ENCODE measurements at regions of chr21 and their contacts with region 1.

Region 1: GRCh38 chr21:38805328-38806152 is at the start of gene ETS2:
- DNase-seq: peak; percentile 91 to 94
- ATAC-seq: peak; percentile 88 to 94 (median 92)
- H3K4me3 ChIP-seq: peak within 1 kb of the TSS; percentile 68 to 100 (median 92)
- H3K27ac ChIP-seq: peak within 1 kb of the TSS; percentile 91 to 99 (median 98)
- H3K4me1 ChIP-seq: peaks cover 0 to 39% (median 16%) of the 10 kb centered on the region in 9 donors
- H3K27me3 ChIP-seq: no peaks in the 10 kb centered on the region
- CTCF ChIP-seq: peak in 2 of 9 donors; percentile 6 to 31
- total RNA-seq, gene ETS2: 27.5 to 81.5 (median 46.5) TPM

Region 2: DNA sequence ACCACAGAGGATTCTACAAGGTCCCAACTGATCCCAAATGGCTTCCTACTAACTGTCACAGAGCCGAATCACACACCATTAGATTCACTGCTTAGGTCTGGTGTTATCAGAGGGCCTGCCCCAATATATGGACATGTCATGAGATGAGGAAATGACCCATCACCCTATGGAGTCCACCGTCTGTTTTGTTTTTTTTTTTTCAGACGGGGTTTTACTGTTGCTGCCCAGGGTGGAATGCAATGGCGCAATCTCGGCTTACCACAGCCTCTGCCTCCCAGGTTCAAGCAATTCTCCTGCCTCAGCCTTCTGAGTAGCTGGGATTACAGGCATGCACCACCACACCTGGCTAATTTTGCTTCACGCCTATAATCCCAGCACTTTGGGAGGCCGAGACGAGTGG is 83.6 kb before region 1 on chr21:
- intact Hi-C with region 1: no loop called
- DNase-seq: no peak
- ATAC-seq: no peak
- H3K4me3 ChIP-seq: no peak overlapping the region
- H3K27ac ChIP-seq: no peak overlapping the region
- H3K4me1 ChIP-seq: no peaks in the 10 kb centered on the region
- H3K27me3 ChIP-seq: no peaks in the 10 kb centered on the region
- CTCF ChIP-seq: no peak

Region 3: DNA sequence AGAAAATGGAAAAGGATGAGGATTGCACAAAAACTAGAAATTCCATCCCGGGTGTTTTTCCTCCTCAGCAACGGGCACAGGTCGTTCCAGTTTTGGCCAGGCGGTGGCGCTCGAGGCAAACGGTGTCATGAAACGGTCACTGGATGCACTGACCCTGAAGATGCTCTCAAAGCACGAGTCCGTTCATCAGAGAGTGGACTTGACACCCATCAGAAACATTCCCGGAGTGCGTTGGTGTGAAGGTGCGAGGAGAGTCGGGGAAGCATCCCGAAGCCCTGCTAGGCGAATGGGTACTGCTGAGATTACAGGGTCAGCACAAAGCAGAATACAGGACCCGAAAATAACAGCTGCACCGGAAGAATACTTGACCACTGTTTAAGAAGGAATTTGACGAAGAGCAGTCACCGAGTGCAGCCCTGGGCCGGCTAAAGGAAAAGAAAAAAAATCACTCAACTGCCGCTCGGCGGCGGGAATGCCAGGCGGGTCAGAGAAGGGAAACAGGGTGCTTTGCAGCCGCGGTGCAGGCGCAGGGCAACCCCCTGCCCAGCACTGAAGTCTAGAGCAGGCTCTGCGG is 71.5 kb before region 1 on chr21:
- intact Hi-C with region 1: loop called in 7 of 10 experiments (anchors 2 to 10 kb)
- DNase-seq: peak; percentile 90 to 93
- ATAC-seq: peak; percentile 88 to 96 (median 94)
- H3K4me3 ChIP-seq: peak overlapping the region in 8 of 10 donors; percentile 18 to 44 (median 40)
- H3K27ac ChIP-seq: peak overlapping the region in 9 of 10 donors; percentile 47 to 90 (median 75)
- H3K4me1 ChIP-seq: peaks cover 2 to 25% (median 10%) of the 10 kb centered on the region in 9 donors
- H3K27me3 ChIP-seq: peaks cover 0 to 6% (median 0%) of the 10 kb centered on the region in 7 donors
- CTCF ChIP-seq: peak; percentile 87 to 95 (median 94)

Region 4: GRCh38 chr21:38903690-38904139 is 98.2 kb after region 1 on chr21:
- intact Hi-C with region 1: loop called in 6 of 10 experiments (anchors 2 to 5 kb)
- DNase-seq: no peak
- ATAC-seq: peak in 4 of 8 donors; percentile 13 to 75 (median 34)
- H3K4me3 ChIP-seq: no peak overlapping the region
- H3K27ac ChIP-seq: peak overlapping the region; percentile 15 to 84 (median 72)
- H3K4me1 ChIP-seq: peaks cover 15 to 40% (median 26%) of the 10 kb centered on the region in 9 donors
- H3K27me3 ChIP-seq: no peaks in the 10 kb centered on the region
- CTCF ChIP-seq: no peak

Region 5: GRCh38 chr21:38993561-38993960 is 188.0 kb after region 1 on chr21:
- intact Hi-C with region 1: loop called in 5 of 10 experiments (anchors 2 to 5 kb)
- DNase-seq: peak in 1 of 2 donors; percentile 77
- ATAC-seq: peak in 7 of 8 donors; percentile 24 to 72 (median 43)
- H3K4me3 ChIP-seq: no peak overlapping the region
- H3K27ac ChIP-seq: peak overlapping the region in 9 of 10 donors; percentile 27 to 96 (median 66)
- H3K4me1 ChIP-seq: peaks cover 30 to 100% (median 85%) of the 10 kb centered on the region in 9 donors
- H3K27me3 ChIP-seq: peaks cover 0 to 5% (median 0%) of the 10 kb centered on the region in 7 donors
- CTCF ChIP-seq: no peak

Region 6: DNA sequence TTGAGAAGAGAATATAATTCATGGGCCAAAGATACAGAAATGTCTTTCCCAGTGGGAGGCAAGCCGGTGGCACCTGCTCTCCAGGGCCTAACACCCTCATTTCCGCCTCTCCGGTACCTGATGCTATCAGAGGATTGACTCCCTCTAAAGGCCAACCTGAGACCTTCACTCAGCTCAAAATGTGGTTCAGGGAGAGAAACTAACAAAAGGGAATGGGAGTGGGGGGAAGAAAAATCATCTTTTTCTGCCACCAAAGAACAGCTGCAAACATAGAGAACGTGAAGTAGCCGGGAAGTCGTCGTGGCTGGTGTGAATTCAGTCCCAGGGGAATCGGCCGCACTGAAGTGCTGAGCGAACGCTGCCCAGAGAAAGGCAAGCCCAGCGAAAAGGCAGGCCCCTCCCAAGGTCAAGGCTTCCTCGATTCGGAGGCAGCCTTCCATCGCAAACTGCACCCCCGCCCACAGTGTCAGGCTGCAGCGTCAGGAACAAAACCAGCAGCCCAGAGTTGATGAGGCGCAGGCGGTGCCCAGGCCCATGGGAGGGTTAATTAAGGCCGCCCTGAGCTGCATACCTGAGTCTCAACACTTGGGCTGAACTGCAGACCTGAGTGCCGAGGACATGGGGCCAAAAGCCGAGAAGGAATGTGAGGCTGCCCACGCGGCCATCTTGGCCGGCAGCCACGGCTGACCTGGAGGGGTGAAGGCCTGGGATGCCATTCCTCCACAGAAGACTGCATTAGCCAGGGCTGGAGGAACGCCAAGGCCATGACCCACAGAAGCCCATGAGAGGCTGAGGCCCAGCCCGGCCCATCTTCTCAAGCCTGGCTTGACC is 217.5 kb after region 1 on chr21:
- intact Hi-C with region 1: loop called in 2 of 10 experiments (anchors 5 to 10 kb)
- DNase-seq: peak; percentile 80 to 82
- ATAC-seq: peak; percentile 81 to 95 (median 86)
- H3K4me3 ChIP-seq: peak overlapping the region in 2 of 10 donors; percentile 4 to 6
- H3K27ac ChIP-seq: peak overlapping the region; percentile 6 to 87 (median 74)
- H3K4me1 ChIP-seq: peaks cover 11 to 40% (median 34%) of the 10 kb centered on the region in 9 donors
- H3K27me3 ChIP-seq: no peaks in the 10 kb centered on the region
- CTCF ChIP-seq: peak in 8 of 9 donors; percentile 14 to 57 (median 32)

Region 7: DNA sequence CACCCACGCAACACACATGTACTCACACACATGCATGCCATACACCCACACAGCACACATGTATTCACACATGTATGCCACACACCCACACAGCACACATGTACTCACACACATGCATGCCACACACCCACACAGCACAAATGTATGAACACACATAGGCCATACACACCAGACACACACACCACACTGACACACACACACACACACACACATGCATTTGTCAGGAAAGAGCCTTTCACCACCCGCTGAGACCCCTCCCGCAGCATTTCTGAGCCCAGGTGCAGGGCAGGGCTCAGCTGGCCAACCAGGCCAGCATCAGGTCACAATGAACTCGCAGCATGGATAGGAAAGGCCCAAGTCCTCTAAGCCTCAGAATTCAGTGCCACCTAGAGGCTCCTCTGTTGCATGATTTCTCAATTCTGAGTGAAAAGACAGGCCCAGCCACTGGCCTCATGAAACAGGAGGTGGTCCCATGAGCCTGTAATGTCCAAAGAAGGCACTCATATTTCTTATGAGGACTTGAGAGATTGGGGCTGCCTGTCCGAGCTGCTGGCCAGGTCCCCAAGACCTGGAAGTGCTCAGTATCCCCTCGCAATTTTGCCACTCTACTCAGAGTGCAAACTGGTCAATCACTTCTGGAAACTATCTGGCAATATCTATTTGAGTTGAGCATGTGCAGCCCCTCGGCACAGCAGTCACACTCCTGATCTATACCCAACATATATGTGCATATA is 320.4 kb after region 1 on chr21:
- intact Hi-C with region 1: loop called in 9 of 10 experiments (anchors 1 to 5 kb)
- DNase-seq: peak in 1 of 2 donors; percentile 67
- ATAC-seq: peak; percentile 89 to 96 (median 94)
- H3K4me3 ChIP-seq: no peak overlapping the region
- H3K27ac ChIP-seq: peak overlapping the region in 4 of 10 donors; percentile 4 to 68 (median 52)
- H3K4me1 ChIP-seq: peaks cover 0 to 25% (median 13%) of the 10 kb centered on the region in 9 donors
- H3K27me3 ChIP-seq: no peaks in the 10 kb centered on the region
- CTCF ChIP-seq: peak; percentile 43 to 81 (median 69)

Region 8: GRCh38 chr21:39430457-39430856 is 624.9 kb after region 1 on chr21:
- intact Hi-C with region 1: no loop called
- DNase-seq: no peak
- ATAC-seq: no peak
- H3K4me3 ChIP-seq: no peak overlapping the region
- H3K27ac ChIP-seq: no peak overlapping the region
- H3K4me1 ChIP-seq: no peaks in the 10 kb centered on the region
- H3K27me3 ChIP-seq: no peaks in the 10 kb centered on the region
- CTCF ChIP-seq: no peak